ENCODE measurements at regions of chr5 and their contacts with region 1.

Region 1: GRCh38 chr5:154649569-154649968 is 105.6 kb upstream of the LARP1 start:
- DNase-seq: no peak
- H3K4me3 Mint-ChIP-seq: no peak overlapping the region
- H3K27ac Mint-ChIP-seq: no peak overlapping the region
- H3K4me1 Mint-ChIP-seq: peaks cover 10% of the 10 kb centered on the region
- H3K27me3 Mint-ChIP-seq: peaks cover 18% of the 10 kb centered on the region

Region 2: DNA sequence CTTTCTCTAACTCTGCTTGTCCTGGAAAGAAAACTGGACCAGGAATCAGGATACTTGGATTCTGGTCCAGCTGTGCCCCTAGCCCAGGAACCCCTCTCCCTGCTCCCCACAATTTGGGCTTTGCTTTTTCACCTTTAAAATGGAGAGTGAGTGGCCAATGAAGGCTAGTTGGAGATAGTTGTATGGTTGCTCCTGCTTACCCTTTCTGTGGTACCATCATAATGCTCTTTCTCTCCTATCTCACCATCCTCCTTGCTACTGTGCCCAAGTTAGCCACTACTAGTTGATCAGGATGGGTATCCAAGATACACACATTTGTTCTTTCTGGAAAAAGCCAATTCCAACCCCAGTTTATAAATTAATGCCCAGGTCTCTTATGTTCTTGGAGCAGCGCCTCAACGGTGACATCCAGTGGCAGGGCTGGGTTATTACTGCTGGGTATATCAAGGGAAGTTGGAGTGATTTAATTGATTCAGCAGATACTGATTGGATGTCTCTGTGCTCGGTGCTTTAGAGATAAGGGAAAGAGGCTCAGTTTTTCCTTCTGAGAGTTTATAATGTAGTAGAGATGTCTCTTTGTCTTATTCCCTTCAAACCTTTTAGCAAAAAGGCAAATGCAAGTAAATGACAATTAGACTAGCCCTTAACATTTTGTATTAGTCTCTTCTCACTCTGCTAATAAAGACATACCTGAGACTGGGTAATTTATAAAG is 162.2 kb after region 1 on chr5:
- CTCF ChIA-PET with region 1: interaction called, 11 read pairs
- POLR2A ChIA-PET with region 1: interaction called, 3 read pairs
- DNase-seq: peak; percentile 67
- H3K4me3 Mint-ChIP-seq: no peak overlapping the region
- H3K27ac Mint-ChIP-seq: peak overlapping the region; percentile 61
- H3K4me1 Mint-ChIP-seq: peaks cover 29% of the 10 kb centered on the region
- H3K27me3 Mint-ChIP-seq: no peaks in the 10 kb centered on the region

Region 3: GRCh38 chr5:154940772-154941620 is 291.4 kb after region 1 on chr5 and contains the start of gene MRPL22:
- CTCF ChIA-PET with region 1: interaction called, 13 read pairs
- POLR2A ChIA-PET with region 1: no interaction called
- DNase-seq: peak; percentile 95
- H3K4me3 Mint-ChIP-seq: peak within 1 kb of the TSS; percentile 93
- H3K27ac Mint-ChIP-seq: peak within 1 kb of the TSS; percentile 90
- H3K4me1 Mint-ChIP-seq: peaks cover 52% of the 10 kb centered on the region
- H3K27me3 Mint-ChIP-seq: no peaks in the 10 kb centered on the region
- total RNA-seq, gene MRPL22: 60.0 to 62.2 TPM

Measured in activated CD4-positive, alpha-beta memory T cell treated with anti-CD3 and anti-CD28 coated beads, Interleukin-2, amount 10 ng/mL, durations not matched to agents 7 days and 5 days (primary cell).